Activated B cell treated with CpG ODN at 0.5 μM for 24 hours (primary cell): ENCODE measurements at regions of chr11 and their contacts with region 1.

Region 1: GRCh38 chr11:108008656-108009496 is at the start of gene CUL5:
- DNase-seq: peak; percentile 89
- ATAC-seq: peak; percentile 87
- H3K4me3 Mint-ChIP-seq: peak within 1 kb of the TSS; percentile 99
- H3K27ac Mint-ChIP-seq: peak within 1 kb of the TSS; percentile 96
- H3K4me1 Mint-ChIP-seq: peaks cover 10% of the 10 kb centered on the region
- H3K27me3 Mint-ChIP-seq: no peaks in the 10 kb centered on the region
- CTCF ChIP-seq: no peak
- total RNA-seq, gene CUL5: 38.4 and 42.0 TPM in 2 replicates

Region 2: GRCh38 chr11:107969219-107969618 is 39.7 kb before region 1 on chr11:
- CTCF ChIA-PET with region 1: no interaction called
- POLR2A ChIA-PET with region 1: no interaction called
- intact Hi-C with region 1: no loop called
- DNase-seq: no peak
- ATAC-seq: no peak
- H3K4me3 Mint-ChIP-seq: no peak overlapping the region
- H3K27ac Mint-ChIP-seq: no peak overlapping the region
- H3K4me1 Mint-ChIP-seq: no peaks in the 10 kb centered on the region
- H3K27me3 Mint-ChIP-seq: no peaks in the 10 kb centered on the region
- CTCF ChIP-seq: no peak

Region 3: DNA sequence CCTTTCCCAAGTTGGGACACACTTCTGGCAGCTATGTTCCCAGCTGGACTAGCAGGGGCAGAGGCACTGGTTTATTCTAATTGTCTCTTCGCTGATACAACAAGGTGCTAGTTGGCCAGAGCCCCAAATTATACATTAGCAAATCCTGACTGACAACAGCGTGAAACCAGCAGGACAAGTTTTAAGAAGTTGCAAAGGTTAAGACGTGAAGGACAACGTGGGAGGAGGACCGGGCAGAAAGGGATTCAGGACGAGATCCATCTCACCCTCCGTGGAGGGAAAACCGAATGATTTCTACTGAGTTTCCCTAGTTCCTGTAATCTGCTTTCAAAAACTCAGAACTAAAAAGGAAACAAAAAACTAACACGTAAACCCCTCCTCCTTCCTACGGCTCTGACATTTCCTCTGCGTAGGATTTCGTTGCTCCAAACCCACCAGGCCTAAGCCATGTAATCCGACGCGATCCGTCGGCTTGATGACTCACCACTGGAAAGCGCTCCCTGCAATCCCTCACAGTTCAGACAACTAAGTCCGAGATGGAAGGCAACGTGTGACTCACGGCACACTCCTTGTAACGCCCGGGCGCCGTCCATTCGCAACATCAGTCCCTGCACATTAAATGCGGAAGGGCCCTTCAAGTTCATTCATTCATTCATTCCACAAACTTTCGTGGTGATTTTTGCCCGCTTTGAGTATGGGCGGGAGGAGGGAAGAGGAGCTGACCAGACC is 488.6 kb after region 1 on chr11:
- CTCF ChIA-PET with region 1: no interaction called
- POLR2A ChIA-PET with region 1: no interaction called
- intact Hi-C with region 1: loop called (anchors 2 kb)
- DNase-seq: peak; percentile 51
- ATAC-seq: peak; percentile 71
- H3K4me3 Mint-ChIP-seq: peak overlapping the region; percentile 100
- H3K27ac Mint-ChIP-seq: peak overlapping the region; percentile 97
- H3K4me1 Mint-ChIP-seq: peaks cover 15% of the 10 kb centered on the region
- H3K27me3 Mint-ChIP-seq: no peaks in the 10 kb centered on the region
- CTCF ChIP-seq: no peak